ENCODE measurements at regions of chr11 and their contacts with region 1.

Region 1: DNA sequence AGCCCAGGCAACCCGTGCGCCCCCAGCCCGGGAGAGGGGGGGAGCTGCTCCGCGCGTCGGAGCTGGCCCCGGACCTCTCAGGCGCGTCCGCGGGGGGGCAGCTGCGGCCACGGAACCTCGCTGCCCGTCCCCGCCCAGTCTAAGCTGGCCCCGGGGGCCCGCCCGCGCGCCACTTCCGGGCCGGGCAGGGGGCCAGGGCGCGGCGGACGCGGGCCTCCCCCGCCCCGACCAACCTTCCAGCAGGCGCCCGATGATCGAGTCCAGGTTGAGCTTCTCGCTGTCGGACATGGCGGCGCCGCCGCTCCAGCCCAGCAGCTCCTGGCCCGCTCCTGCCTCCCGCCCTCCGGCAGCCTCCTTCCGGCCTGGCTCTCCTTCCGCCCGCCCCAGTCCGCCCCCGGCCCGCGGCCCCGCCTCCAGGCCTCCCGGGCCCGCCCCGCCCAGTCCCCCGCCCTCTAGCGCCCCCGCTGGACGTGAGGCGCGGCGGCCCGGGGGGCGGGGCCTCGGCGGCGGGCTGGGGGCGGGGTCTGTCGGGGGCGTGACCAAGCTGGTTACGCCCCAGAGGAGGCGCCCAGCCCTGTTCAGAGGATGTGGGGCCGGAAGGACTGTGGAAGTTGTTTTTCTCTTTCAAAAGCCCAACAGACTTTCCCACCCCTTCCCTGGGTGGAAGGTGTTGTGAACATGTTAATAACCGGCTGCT is at the start of gene PPP1CA:
- DNase-seq: peak; percentile 83 to 95 (median 90)
- H3K4me3 ChIP-seq: peak within 1 kb of the TSS; percentile 64 to 100 (median 95)
- H3K27ac ChIP-seq: peak within 1 kb of the TSS; percentile 82 to 100 (median 96)
- H3K27me3 ChIP-seq: no peaks in the 10 kb centered on the region
- CTCF ChIP-seq: peak in 49 of 56 donors; percentile 8 to 75 (median 40)
- total RNA-seq, gene PPP1CA: 47.4 to 86.5 (median 66.9) TPM

Region 2: DNA sequence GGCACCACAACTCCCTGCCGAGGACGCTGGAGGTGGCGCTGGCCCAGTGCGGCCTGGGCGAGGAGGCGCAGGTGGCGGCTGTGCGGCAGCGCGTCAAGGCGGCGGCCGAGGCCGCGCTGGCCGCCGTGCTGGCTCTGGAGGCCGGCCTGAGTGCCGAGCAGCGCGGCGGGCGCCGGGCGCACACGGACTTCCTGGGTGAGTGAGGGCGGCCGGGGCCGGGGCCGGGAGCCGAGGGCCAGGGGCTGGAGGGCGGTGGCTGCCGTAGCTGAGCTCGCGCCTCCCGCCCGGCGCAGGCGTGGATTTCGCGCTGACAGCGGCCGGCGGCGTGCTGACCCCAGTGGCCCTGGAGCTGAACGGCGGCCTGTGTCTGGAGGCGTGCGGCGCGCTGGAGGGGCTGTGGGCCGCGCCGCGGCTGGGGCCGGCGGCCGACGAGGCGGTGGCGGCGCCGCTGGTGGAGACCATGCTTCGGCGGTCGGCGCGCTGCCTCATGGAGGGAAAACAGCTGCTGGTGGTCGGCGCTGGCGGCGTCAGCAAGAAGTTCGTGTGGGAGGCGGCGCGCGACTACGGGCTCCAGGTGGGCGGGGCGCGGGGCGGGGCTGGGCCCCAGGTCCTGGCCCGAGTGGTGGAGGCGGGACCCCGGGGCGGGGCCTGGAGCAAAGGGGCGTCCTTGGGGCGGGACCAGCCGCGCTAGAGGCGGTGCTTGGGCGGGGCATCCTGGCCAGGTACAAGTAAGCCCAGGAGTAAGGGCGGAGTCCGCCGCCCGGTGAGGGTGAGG is 19.2 kb after region 1 on chr11:
- intact Hi-C with region 1: loop called in 1 of 2 experiments (anchors 2 kb)
- DNase-seq: peak; percentile 81 to 99 (median 94)
- H3K4me3 ChIP-seq: peak overlapping the region; percentile 31 to 82 (median 56)
- H3K27ac ChIP-seq: peak overlapping the region in 58 of 59 donors; percentile 38 to 100 (median 94)
- H3K27me3 ChIP-seq: no peaks in the 10 kb centered on the region
- CTCF ChIP-seq: peak in 1 of 56 donors; percentile 18

Region 3: DNA sequence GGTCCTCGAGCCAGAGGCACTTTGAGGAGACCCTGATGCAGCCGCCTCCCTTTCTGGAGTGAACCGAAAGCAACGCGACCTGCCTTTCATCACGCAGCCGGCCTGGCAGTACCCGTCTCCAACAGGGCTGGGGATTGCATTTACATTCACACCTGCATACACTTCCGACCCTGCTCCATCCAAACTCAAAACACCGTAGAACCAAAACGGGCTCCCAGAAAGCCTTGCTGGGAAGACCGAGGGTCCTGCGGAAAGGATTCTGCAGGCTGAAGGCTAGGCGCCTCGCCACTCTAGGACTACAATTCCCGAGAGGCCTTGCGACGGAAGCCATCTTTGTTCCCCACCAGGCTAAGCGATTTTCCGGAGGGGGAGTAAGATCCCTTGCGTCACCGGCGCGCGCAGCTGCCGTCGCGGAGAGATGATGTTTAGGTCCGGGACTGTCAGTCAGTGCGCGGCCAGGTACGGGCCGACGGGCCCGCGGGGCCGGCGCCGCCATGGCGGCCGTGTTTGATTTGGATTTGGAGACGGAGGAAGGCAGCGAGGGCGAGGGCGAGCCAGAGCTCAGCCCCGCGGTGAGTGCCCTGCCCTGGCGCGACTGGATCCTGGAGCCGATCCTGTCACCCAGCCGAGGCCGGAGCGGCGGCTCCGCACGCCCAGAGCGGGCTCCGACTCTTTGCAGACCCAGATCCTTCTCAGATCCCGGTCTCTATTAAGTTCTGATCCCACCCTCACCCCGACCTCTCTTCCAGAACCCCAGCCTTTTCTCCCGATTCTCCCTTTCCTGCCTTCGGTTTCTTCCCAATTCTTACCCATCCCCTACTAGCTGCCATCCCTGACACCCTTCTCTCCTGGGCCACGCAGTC is 26.6 kb after region 1 on chr11 and contains the start of gene RPS6KB2:
- intact Hi-C with region 1: loop called in 1 of 2 experiments (anchors 1 kb)
- DNase-seq: peak; percentile 97 to 100 (median 99)
- H3K4me3 ChIP-seq: peak within 1 kb of the TSS; percentile 55 to 99 (median 92)
- H3K27ac ChIP-seq: peak within 1 kb of the TSS; percentile 52 to 99 (median 95)
- H3K27me3 ChIP-seq: no peaks in the 10 kb centered on the region
- CTCF ChIP-seq: peak in 39 of 56 donors; percentile 9 to 63 (median 31)
- total RNA-seq, gene RPS6KB2: 13.4 to 47.4 (median 28.2) TPM

Region 4: DNA sequence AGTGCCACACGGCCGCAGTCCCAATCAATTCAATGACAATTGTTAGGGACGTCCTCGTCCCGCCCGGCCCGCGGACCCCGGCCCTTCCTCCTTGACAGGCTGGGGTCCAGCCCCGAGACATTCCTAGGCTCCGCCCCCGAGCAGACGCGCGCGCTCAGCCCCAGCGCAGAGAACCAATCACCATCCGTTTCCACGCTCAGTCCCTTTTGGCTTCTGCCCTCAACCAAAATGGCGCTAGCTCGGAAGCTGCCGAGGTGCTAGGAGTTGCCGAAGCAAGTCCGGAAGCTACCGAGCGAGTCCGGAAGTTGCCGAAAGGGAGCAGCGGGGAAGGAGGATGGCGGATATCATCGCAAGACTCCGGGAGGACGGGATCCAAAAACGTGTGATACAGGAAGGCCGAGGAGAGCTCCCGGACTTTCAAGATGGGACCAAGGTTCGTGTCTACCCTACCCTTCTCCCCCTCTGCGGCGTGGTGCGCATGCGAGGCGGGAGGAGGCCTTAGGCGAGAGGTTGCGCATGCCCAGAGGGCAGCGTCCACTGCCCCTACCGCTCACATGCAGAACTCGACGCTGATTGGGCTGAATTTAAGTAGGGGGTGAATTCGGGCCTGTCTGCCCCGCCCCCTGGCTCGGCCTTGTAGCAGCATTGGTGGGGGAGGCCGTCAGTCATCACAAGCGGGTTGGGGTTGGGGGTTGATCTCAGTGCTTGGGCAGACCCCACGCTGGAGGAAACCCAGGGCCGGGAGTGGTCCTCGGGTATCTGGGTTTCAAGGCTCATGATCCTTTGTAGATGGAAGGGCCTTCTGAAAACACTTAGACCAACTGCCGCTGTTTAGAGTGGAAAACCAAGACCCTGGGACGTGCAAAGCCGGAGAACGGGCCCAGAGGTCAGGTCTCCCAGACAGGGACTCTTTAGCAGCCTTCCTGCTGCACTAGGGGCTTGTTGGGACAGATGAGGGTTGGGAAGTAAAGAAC is 81.5 kb after region 1 on chr11 and contains the start of gene AIP:
- intact Hi-C with region 1: loop called (anchors 2 to 5 kb)
- DNase-seq: peak; percentile 87 to 97 (median 96)
- H3K4me3 ChIP-seq: peak within 1 kb of the TSS; percentile 53 to 85 (median 69)
- H3K27ac ChIP-seq: peak within 1 kb of the TSS; percentile 86 to 99 (median 96)
- H3K27me3 ChIP-seq: no peaks in the 10 kb centered on the region
- CTCF ChIP-seq: peak in 36 of 56 donors; percentile 6 to 49 (median 28)
- total RNA-seq, gene AIP: 51.6 to 82.9 (median 65.8) TPM